ENCODE measurements at regions of chr2 and their contacts with region 1.

Region 1: DNA sequence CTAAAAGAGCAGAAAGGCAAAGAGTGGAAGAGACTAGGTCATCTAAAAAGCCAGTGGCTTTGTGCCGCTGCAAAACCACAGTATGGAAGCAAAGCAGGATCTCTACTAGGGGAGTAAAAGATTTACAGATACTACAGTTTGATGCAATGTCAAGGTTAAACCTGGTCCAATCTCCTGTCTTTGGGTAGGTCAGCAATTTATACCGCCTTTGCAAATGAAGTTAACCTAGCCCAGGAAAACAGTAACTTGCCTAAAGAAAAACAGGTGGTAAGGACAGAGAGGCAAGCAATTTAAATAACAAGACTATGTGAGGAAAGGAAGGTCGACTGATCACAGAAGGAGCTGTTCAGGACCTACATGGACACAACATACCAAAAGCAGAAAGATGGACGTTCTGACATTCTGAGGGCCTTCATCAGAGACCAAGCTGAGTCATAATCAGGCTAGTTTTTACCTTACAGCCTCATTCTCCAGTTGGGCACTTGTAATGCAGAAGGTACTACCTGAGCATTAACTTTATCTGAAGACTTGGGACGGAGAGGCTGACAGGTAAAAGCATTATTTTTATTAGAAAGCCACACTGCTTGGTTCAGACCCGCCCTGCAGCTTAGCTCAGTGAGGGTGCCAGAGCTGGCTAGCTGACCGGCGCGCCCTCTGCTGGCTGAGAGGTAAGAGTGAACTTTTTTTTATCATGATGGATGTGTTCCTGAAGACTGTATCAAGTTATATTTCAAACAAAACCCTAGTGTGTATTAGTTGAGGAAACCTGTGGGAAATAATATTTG is 15.9 kb downstream of the CDKL4 start:
- DNase-seq: no peak
- H3K4me3 ChIP-seq: no peak overlapping the region; the same call in 1 of the 2 replicates
- CTCF ChIP-seq: peak; percentile 87

Region 2: GRCh38 chr2:38947240-38948239 is 280.3 kb before region 1 on chr2:
- CTCF ChIA-PET with region 1: interaction called, 129 read pairs
- POLR2A ChIA-PET with region 1: no interaction called
- DNase-seq: peak; percentile 9
- H3K4me3 ChIP-seq: no peak overlapping the region
- CTCF ChIP-seq: peak; percentile 77

Region 3: GRCh38 chr2:39050109-39050508 is 177.7 kb before region 1 on chr2:
- CTCF ChIA-PET with region 1: interaction called, 484 read pairs
- POLR2A ChIA-PET with region 1: no interaction called
- DNase-seq: no peak
- H3K4me3 ChIP-seq: no peak overlapping the region
- CTCF ChIP-seq: no peak

Region 4: GRCh38 chr2:39107719-39108273 is 120.0 kb before region 1 on chr2:
- CTCF ChIA-PET with region 1: interaction called, 11 read pairs
- POLR2A ChIA-PET with region 1: no interaction called
- DNase-seq: no peak
- H3K4me3 ChIP-seq: no peak overlapping the region
- CTCF ChIP-seq: no peak

Region 5: DNA sequence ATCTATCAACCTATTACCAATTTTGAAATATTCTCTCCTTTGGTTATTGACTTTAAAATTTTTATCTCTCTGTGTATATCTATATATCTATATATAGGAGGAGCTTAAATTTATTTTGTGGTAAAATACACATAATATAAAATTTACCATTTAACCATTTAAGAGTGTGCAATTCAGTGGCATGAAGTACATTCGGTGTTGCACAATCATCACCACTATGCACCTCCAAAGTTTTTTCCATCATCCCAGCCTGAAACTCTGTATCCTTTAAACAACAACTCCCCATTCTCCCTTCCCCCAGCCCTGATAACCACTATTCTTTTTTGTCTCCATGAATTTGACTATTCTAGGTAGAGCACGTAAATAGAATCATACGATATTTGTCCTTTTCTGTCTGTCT is 33.1 kb before region 1 on chr2:
- CTCF ChIA-PET with region 1: interaction called, 12 read pairs
- POLR2A ChIA-PET with region 1: no interaction called
- DNase-seq: no peak
- H3K4me3 ChIP-seq: no peak overlapping the region
- CTCF ChIP-seq: no peak

Region 6: DNA sequence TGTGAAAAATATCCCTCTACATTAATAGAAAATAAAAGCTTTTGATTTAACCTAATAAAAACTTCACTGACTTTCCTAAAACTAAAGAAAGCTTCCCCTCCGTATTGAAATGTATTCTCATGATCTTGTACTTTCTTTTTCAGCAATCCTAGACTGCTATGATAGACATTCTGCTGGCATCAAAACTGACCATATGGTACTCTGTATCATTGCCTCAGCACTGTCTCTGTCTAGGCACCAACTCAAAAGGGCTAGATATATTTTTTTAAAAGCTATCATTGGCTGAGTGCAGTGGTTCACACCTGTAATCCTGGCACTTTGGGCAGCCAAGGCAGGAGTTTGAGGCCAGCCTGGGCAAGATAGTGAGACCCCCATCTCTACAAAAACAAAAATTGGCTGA is 17.0 kb before region 1 on chr2:
- CTCF ChIA-PET with region 1: interaction called, 24 read pairs
- POLR2A ChIA-PET with region 1: no interaction called
- DNase-seq: no peak
- H3K4me3 ChIP-seq: no peak overlapping the region
- CTCF ChIP-seq: no peak

Region 7: DNA sequence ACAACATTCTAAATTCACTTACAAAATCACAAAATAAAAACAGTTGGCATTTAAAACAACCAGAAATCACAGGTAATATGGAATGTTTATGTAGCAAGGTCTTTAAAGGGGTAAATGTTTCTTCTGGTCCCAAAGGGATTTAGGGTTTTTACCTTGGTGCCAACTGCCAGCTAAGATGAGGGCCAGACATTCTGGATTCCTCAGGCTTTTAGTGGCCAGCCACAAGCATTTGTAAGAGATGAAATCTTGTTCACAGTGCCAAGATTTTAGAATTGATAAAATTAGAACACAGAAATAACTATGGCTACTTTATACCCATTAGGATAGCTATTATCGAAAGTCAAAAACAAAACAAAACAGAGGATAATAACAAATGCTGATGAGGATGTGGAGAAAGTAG is 76.4 kb after region 1 on chr2:
- CTCF ChIA-PET with region 1: no interaction called
- POLR2A ChIA-PET with region 1: no interaction called
- DNase-seq: peak; percentile 29
- H3K4me3 ChIP-seq: no peak overlapping the region
- CTCF ChIP-seq: no peak